ENCODE measurements at regions of chr15 and their contacts with region 1.

Region 1: DNA sequence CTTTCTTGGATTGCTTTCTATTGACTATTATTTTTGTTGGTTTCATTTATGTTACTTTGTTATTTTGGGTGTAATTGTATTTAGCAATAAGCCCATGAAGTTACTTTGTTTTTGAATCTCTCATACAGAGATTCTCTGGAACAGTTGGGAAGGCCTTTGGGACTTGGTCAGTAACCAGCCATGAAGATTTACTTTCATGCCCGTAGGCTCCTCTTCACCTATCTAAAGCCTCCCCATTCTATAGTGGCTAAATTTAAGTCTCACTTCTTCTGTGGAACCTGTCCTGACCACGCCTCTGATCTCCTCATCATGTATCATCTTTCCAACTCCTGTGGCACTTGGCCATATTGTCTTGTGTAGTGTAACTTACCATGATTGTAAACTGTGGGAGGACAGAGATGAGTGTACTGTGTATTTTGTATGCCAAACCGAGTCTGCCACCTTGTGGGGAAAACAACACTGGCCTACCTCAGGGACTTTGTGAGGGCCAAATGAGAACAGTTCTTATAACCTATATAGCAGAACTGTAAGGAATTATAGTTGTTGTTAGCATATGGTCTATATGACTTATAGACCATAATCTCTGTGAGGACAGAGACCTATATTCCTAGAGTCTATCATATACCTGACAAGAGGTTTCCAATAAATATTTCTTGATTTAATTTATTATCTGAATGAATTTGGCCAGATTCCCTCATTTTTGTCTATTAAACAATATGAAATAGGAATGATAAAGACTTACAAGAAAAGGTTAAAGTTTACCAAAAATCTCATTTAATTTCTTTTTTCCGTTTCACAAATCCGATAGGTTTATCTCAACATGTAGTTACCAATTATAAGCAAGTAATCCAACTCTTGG is 75.0 kb downstream of the STARD9 start:
- DNase-seq: peak; percentile 86
- ATAC-seq: peak; percentile 100
- H3K4me3 Mint-ChIP-seq: no peak overlapping the region
- H3K27ac Mint-ChIP-seq: no peak overlapping the region
- H3K4me1 Mint-ChIP-seq: peaks cover 14% of the 10 kb centered on the region
- H3K27me3 Mint-ChIP-seq: no peaks in the 10 kb centered on the region

Region 2: DNA sequence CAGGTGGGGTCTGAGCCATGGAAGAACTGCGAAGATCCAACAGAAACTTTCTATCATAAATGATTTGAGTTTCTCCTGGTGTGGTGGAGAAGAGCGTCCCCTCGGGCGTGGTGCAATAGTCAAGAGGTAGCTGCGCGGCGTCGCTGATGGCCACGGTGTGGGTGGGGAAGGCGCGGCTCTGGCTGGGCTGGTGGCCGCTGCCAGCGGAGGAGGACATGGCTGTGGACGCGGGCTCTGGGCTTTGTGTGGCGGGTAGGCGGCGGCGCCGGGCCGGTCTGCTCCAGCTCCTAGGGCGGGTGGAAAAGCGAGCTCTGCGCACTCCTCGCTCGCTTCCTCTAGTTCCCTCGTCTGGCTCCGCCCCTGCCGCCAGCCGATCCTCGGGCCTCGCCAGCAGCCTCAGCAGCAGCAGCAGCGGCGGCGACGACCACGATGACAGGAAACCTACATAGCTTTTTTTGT is 69.1 kb before region 1 on chr15:
- CTCF ChIA-PET with region 1: interaction called, 12 read pairs
- DNase-seq: peak; percentile 92
- ATAC-seq: peak; percentile 100
- H3K4me3 Mint-ChIP-seq: peak overlapping the region; percentile 79
- H3K27ac Mint-ChIP-seq: peak overlapping the region; percentile 79
- H3K4me1 Mint-ChIP-seq: peaks cover 46% of the 10 kb centered on the region
- H3K27me3 Mint-ChIP-seq: peaks cover 4% of the 10 kb centered on the region

Measured in activated CD8-positive, alpha-beta memory T cell treated with anti-CD3 and anti-CD28 coated beads, Interleukin-2, amount 10 ng/mL, durations not matched to agents 7 days and 5 days (primary cell).